ENCODE measurements at regions of chr16 and their contacts with region 1.

Region 1: DNA sequence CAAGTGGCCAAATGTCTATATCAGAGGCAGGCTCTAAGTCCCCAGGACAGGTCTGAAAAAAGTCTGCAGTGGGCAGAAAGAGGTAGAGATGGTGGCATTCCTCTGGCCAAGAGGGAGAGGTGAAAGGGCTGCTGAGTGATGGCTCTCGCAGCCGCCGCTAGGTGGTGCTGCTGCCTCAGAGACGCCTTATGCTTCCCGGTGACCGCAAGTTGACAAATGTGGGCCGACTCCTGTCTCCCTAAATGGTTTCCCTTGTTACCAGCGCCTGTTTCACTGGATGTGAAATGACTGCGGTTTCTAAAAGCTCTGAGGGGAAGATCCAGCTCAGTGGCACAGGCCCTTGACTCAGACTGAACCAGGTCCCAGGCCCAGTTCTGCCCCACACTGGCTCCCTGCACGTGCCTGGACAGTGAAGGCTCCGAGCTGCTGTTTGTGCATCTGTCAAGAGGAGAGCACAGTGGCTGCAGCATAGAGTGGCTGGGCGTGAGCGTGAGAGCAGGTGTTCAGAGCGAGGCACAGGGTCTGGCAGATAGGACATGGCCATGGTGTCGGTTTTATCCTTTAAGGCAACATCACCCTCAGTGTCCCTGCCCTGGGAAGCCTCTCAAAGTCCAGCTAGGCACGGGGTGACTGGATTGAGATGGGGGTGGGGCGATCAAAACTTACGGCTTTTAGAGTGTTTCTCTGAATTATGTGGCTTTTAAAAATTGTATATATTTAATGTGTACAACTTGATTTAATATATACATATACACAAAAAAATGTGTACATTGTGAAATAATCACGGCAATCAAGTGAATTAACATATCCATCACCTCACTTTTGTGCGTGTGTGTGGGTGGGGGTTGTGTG is 19.9 kb downstream of the CLEC16A start:
- DNase-seq: peak; percentile 86
- ATAC-seq: peak; percentile 35
- H3K4me3 ChIP-seq: no peak overlapping the region
- H3K4me3 Mint-ChIP-seq: peak overlapping the region; percentile 70
- H3K27ac ChIP-seq: no peak overlapping the region
- H3K27ac Mint-ChIP-seq: peak overlapping the region; percentile 86
- H3K4me1 ChIP-seq: peaks cover 23 to 27% of the 10 kb centered on the region in 2 donors
- H3K4me1 Mint-ChIP-seq: peaks cover 39% of the 10 kb centered on the region
- H3K27me3 ChIP-seq: no peaks in the 10 kb centered on the region
- H3K27me3 Mint-ChIP-seq: no peaks in the 10 kb centered on the region
- CTCF ChIP-seq: peak; percentile 95

Region 2: GRCh38 chr16:10895053-10895946 is 69.0 kb before region 1 on chr16:
- CTCF ChIA-PET with region 1: no interaction called
- POLR2A ChIA-PET with region 1: no interaction called
- intact Hi-C with region 1: no loop called
- DNase-seq: peak; percentile 72
- ATAC-seq: no peak
- H3K4me3 ChIP-seq: no peak overlapping the region
- H3K4me3 Mint-ChIP-seq: peak overlapping the region; percentile 78
- H3K27ac ChIP-seq: peak overlapping the region; percentile 68 to 77
- H3K27ac Mint-ChIP-seq: peak overlapping the region; percentile 92
- H3K4me1 ChIP-seq: peaks cover 88 to 93% of the 10 kb centered on the region in 2 donors
- H3K4me1 Mint-ChIP-seq: peaks cover 93% of the 10 kb centered on the region
- H3K27me3 ChIP-seq: no peaks in the 10 kb centered on the region
- H3K27me3 Mint-ChIP-seq: no peaks in the 10 kb centered on the region
- CTCF ChIP-seq: no peak

Region 3: GRCh38 chr16:10981697-10982216 is 17.5 kb after region 1 on chr16:
- CTCF ChIA-PET with region 1: interaction called, 64 read pairs
- POLR2A ChIA-PET with region 1: interaction called, 7 read pairs
- intact Hi-C with region 1: loop called (anchors 1 kb)
- DNase-seq: peak; percentile 73
- ATAC-seq: peak; percentile 93
- H3K4me3 ChIP-seq: no peak overlapping the region
- H3K4me3 Mint-ChIP-seq: peak overlapping the region; percentile 82
- H3K27ac ChIP-seq: peak overlapping the region in 1 of 2 donors; percentile 10
- H3K27ac Mint-ChIP-seq: peak overlapping the region; percentile 84
- H3K4me1 ChIP-seq: peaks cover 4 to 22% of the 10 kb centered on the region in 2 donors
- H3K4me1 Mint-ChIP-seq: peaks cover 39% of the 10 kb centered on the region
- H3K27me3 ChIP-seq: no peaks in the 10 kb centered on the region
- H3K27me3 Mint-ChIP-seq: no peaks in the 10 kb centered on the region
- CTCF ChIP-seq: peak; percentile 66

Region 4: DNA sequence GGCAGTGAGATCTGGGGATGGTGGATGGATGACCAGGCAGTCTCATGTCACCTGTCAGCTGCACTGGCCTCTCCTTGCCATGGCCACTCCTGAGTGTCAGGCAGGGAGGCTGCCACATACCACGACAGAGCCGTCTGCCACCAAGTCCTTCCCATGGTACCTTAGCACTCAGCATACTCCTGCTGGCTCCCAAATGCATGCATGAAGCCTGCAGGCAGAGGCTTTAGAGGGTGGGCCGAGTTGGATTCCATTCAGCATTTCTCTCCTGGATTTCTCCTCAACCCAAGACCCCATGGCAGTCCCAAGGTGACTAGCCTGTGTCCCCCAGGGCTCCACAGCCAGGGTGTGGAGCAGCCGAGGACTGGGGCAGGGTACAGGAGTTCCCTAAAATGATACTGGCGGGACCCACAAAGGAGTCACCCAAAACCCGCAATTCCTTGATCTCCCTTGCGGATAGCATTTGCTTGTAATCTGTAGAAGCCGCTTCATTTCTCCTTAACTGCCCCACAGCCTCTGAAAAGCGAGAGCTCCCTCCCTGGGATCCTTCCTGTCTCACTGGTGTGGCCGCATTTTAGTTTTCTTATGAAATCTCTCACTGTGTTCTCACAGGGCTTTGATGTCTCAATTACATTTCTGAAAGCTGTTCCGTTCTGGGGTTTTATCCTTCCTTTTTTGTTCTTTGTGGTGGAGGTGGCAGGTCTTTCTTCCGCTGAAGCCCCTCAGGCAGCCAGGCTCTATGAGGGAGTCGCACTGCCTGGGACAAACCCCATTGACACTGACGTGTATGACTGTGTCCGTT is 150.3 kb after region 1 on chr16:
- CTCF ChIA-PET with region 1: no interaction called
- POLR2A ChIA-PET with region 1: no interaction called
- intact Hi-C with region 1: no loop called
- DNase-seq: no peak
- ATAC-seq: no peak
- H3K4me3 ChIP-seq: no peak overlapping the region
- H3K4me3 Mint-ChIP-seq: no peak overlapping the region
- H3K27ac ChIP-seq: no peak overlapping the region
- H3K27ac Mint-ChIP-seq: no peak overlapping the region
- H3K4me1 ChIP-seq: no peaks in the 10 kb centered on the region
- H3K4me1 Mint-ChIP-seq: peaks cover 9% of the 10 kb centered on the region
- H3K27me3 ChIP-seq: no peaks in the 10 kb centered on the region
- H3K27me3 Mint-ChIP-seq: no peaks in the 10 kb centered on the region
- CTCF ChIP-seq: no peak

Region 5: GRCh38 chr16:11297492-11298142 is 333.4 kb after region 1 on chr16:
- CTCF ChIA-PET with region 1: interaction called, 17 read pairs
- POLR2A ChIA-PET with region 1: interaction called, 3 read pairs
- intact Hi-C with region 1: no loop called
- DNase-seq: peak; percentile 95
- ATAC-seq: peak; percentile 97
- H3K4me3 ChIP-seq: peak overlapping the region in 4 of 5 experiments; percentile 0 to 41 (median 25)
- H3K4me3 Mint-ChIP-seq: peak overlapping the region; percentile 67
- H3K27ac ChIP-seq: peak overlapping the region; percentile 67 to 73
- H3K27ac Mint-ChIP-seq: peak overlapping the region; percentile 93
- H3K4me1 ChIP-seq: peaks cover 61 to 66% of the 10 kb centered on the region in 2 donors
- H3K4me1 Mint-ChIP-seq: peaks cover 71% of the 10 kb centered on the region
- H3K27me3 ChIP-seq: peaks cover 0 to 4% (median 0%) of the 10 kb centered on the region in 4 experiments
- H3K27me3 Mint-ChIP-seq: no peaks in the 10 kb centered on the region
- CTCF ChIP-seq: peak; percentile 35

Region 6: GRCh38 chr16:11370084-11370931 is 406.0 kb after region 1 on chr16:
- CTCF ChIA-PET with region 1: interaction called, 10 read pairs
- POLR2A ChIA-PET with region 1: interaction called, 7 read pairs
- intact Hi-C with region 1: no loop called
- DNase-seq: peak; percentile 93
- ATAC-seq: peak; percentile 98
- H3K4me3 ChIP-seq: no peak overlapping the region
- H3K4me3 Mint-ChIP-seq: peak overlapping the region; percentile 62
- H3K27ac ChIP-seq: peak overlapping the region; percentile 44 to 56
- H3K27ac Mint-ChIP-seq: peak overlapping the region; percentile 71
- H3K4me1 ChIP-seq: peaks cover 23 to 26% of the 10 kb centered on the region in 2 donors
- H3K4me1 Mint-ChIP-seq: peaks cover 35% of the 10 kb centered on the region
- H3K27me3 ChIP-seq: no peaks in the 10 kb centered on the region
- H3K27me3 Mint-ChIP-seq: no peaks in the 10 kb centered on the region
- CTCF ChIP-seq: no peak

Region 7: DNA sequence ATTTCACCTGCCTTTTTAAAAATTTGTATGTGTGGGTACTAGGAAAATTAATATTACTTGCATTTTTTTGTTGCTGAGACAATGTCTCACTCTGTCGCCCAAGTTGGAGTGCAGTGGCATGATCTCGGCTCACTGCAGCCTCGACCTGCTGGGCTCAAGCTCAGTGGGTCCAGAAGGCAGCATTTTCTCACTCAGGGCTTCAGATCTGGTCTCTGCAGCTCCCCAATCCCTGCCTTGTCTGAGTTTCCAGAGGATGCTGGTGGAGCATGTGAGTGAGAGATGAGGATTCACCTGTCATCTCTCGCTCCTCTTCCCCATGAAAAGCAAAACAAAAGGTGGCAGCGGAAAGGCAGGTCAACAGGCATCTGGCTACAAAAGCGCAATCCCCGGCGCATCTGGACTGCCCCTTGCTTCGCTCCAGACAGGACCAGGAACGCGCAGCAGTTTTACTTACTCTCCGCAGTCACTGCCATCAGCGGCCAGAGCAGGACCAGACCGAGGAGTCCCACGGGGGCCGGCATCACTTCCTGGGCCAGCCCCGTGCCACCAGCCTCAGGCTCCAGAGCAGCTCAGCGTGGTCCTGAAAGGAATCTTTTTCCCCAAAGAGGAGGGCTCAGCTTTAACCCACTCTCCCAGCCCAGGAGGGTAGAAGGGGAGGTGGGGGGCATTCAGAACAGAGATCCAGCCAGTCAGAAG is 562.5 kb after region 1 on chr16:
- CTCF ChIA-PET with region 1: interaction called, 31 read pairs
- POLR2A ChIA-PET with region 1: no interaction called
- intact Hi-C with region 1: loop called (anchors 10 kb)
- DNase-seq: no peak
- ATAC-seq: no peak
- H3K4me3 ChIP-seq: no peak overlapping the region
- H3K4me3 Mint-ChIP-seq: no peak overlapping the region
- H3K27ac ChIP-seq: no peak overlapping the region
- H3K27ac Mint-ChIP-seq: no peak overlapping the region
- H3K4me1 ChIP-seq: no peaks in the 10 kb centered on the region
- H3K4me1 Mint-ChIP-seq: peaks cover 3% of the 10 kb centered on the region
- H3K27me3 ChIP-seq: peaks cover 0 to 4% (median 0%) of the 10 kb centered on the region in 4 experiments
- H3K27me3 Mint-ChIP-seq: peaks cover 8% of the 10 kb centered on the region
- CTCF ChIP-seq: no peak

Region 8: DNA sequence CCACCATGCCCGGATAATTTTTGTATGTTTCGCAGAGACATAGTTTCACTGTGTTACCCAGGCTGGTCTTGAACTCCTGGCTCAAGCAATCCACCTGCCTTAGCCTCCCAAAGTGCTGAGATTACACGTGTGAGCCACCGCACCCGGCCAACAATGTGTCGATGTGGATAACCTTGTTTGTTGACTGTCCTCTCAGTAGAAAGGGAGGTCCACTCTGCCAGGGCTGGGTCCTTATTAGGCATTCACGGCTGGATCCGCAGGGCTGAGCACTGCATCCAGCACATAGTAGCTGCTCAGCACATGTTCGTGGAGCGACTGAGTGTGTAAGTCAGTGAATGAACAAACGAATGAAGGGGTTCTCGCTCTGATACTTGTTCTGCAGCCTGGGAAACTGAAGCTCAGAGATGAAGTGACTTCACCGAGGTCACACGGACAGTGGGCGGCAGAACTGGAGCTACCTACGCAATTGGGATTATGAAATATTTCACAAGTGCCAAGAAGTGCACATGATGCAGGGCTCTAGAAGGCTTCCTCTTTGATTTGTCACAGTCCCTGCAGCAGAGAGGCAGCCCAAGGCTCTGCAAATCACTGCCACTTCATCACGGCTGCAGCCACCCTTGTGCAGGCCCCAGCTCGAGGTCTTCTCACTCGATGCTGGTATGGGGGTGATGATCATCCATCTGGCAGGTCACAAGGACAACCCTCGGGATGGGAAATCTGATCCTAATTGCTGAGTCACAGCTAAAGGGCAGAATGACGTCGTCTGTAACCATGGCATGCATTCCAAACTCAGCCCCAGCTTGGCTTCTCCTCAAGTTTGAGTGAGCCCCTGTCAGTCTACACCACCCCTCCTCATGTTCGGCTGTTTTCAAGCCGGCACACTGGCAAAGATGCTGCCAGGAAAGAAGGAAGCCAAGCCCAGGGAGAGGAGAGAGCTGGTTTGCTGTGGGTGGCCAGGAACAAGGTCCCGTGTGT is 675.9 kb after region 1 on chr16:
- CTCF ChIA-PET with region 1: interaction called, 11 read pairs
- POLR2A ChIA-PET with region 1: interaction called, 3 read pairs
- intact Hi-C with region 1: loop called (anchors 5 kb)
- DNase-seq: no peak
- ATAC-seq: no peak
- H3K4me3 ChIP-seq: no peak overlapping the region
- H3K4me3 Mint-ChIP-seq: no peak overlapping the region
- H3K27ac ChIP-seq: no peak overlapping the region
- H3K27ac Mint-ChIP-seq: no peak overlapping the region
- H3K4me1 ChIP-seq: peaks cover 7 to 9% of the 10 kb centered on the region in 2 donors
- H3K4me1 Mint-ChIP-seq: peaks cover 6% of the 10 kb centered on the region
- H3K27me3 ChIP-seq: no peaks in the 10 kb centered on the region
- H3K27me3 Mint-ChIP-seq: no peaks in the 10 kb centered on the region
- CTCF ChIP-seq: no peak

Region 9: GRCh38 chr16:11806721-11807120 is 842.5 kb after region 1 on chr16:
- CTCF ChIA-PET with region 1: interaction called, 8 read pairs
- POLR2A ChIA-PET with region 1: no interaction called
- intact Hi-C with region 1: loop called (anchors 5 kb)
- DNase-seq: no peak
- ATAC-seq: no peak
- H3K4me3 ChIP-seq: no peak overlapping the region
- H3K4me3 Mint-ChIP-seq: no peak overlapping the region
- H3K27ac ChIP-seq: no peak overlapping the region
- H3K27ac Mint-ChIP-seq: no peak overlapping the region
- H3K4me1 ChIP-seq: peaks cover 0 to 16% of the 10 kb centered on the region in 2 donors
- H3K4me1 Mint-ChIP-seq: peaks cover 8% of the 10 kb centered on the region
- H3K27me3 ChIP-seq: no peaks in the 10 kb centered on the region
- H3K27me3 Mint-ChIP-seq: no peaks in the 10 kb centered on the region
- CTCF ChIP-seq: no peak

Measured in B cell (primary cell).